GM18951 (cell line): ENCODE measurements at regions of chr2 and their contacts with region 1.

Region 1: DNA sequence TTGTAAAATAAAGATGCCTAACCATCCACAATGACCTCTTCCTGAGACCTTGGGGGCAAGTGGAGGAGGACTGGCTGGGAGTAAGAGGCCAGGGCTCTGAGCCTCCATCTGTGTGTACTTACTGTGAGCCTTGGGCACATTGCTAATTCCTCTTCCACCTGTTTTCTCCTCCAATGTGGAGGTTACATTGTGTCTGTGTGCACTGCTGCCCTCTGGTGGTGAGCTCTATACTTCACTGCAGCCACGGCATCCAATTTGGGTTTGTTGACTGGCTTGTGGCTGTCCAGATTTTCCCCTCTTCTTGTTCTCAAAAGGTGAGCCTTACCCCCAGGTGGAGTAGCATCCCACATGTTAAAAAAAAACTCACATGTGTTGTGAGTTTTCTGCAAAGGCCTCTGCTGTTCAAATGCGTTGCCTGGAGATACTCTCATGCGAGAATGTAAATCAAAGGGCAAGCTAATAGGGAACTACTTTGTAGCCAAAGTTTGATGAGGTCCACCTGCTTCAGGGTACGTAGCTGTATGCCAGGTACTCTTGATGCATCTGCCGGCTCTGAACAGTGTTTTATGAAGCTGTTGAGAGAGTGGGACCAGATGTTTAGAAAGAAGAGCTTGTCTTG is 80.8 kb downstream of the APOB start:
- POLR2A ChIP-seq: no peak

Region 2: DNA sequence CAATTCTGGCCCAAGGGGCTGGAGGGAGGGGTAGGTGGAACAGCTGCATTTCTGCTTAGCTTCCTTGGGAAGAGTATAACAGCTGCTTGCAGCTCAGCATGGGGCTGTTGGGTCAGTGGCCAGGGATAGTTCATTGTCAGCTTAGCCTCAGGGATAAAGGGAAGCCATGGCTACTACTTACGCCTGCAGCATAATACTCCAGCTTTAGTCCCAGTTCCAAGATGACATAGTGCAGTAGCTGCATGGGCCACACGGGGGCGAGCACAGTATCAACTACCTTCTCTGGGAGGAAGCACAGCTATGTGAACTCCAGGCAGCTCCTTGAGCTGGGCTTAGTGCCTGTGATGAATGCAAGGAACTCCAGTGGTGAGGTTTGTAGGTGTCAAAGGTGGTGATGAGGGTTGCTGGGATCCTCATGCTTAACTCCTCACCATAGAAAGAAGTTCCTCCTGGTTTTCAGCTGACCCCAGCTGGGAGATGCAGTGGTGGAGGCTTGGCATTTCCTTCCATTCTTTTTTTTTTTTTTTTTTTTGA is 551.6 kb before region 1 on chr2:
- in situ Hi-C with region 1: loop called (anchors 25 kb)
- POLR2A ChIP-seq: no peak

Region 3: GRCh38 chr2:20661067-20661980 is 301.7 kb before region 1 on chr2:
- in situ Hi-C with region 1: loop called (anchors 10 kb)
- POLR2A ChIP-seq: no peak

Region 4: GRCh38 chr2:20781656-20782265 is 181.3 kb before region 1 on chr2:
- in situ Hi-C with region 1: loop called (anchors 25 kb)
- POLR2A ChIP-seq: no peak